Activated CD4-positive, alpha-beta T cell treated with anti-CD3 and anti-CD28 coated beads, Interleukin-2, amount 10 ng/mL, durations not matched to agents 7 days and 5 days (primary cell): ENCODE measurements at regions of chr4 and their contacts with region 1.

Region 1: DNA sequence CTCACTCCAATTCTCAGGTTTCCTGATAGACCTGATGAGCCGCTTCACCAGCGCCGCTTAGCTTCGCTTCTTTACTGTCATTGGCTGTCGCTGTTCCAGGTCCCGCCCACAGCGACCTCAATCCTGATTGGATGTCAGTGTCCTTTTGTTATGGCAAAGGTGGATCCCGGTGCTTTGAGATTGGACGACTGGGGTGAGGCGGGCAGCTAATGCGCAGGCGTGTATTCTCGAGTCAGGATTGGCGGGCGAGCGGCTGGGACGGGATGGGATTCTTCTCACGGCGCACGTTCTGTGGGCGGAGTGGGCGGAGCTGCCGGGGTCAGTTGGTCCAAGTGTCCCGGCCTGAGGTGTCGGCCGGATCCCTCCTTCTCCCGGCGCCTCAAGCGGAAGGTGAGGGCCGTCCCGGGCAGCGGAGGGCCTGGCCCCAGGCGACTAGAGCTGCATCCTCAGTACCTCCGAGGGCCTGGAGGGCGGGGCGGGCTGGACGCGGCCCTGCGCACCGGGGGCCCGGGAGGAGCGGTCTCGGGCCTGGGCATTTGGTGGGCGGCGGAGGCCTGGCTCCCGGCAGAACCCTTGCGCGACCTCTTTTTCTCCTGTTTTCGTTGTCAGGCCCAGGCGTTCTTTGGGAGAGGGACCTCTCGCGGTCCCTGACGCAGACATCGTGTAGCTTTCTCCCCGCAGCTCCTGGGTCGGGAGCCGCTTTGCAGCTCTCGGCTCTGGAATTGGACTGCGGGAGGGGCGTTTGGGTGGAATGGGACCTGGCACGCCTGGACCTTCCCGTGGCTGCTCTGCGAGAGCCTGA is at the start of gene SCOC:
- DNase-seq: peak; percentile 99
- H3K4me3 Mint-ChIP-seq: no peak within 1 kb of the TSS
- H3K27ac Mint-ChIP-seq: no peak within 1 kb of the TSS
- H3K4me1 Mint-ChIP-seq: peaks cover 28% of the 10 kb centered on the region
- H3K27me3 Mint-ChIP-seq: no peaks in the 10 kb centered on the region
- total RNA-seq, gene SCOC: 20.9 to 22.2 TPM

Region 2: DNA sequence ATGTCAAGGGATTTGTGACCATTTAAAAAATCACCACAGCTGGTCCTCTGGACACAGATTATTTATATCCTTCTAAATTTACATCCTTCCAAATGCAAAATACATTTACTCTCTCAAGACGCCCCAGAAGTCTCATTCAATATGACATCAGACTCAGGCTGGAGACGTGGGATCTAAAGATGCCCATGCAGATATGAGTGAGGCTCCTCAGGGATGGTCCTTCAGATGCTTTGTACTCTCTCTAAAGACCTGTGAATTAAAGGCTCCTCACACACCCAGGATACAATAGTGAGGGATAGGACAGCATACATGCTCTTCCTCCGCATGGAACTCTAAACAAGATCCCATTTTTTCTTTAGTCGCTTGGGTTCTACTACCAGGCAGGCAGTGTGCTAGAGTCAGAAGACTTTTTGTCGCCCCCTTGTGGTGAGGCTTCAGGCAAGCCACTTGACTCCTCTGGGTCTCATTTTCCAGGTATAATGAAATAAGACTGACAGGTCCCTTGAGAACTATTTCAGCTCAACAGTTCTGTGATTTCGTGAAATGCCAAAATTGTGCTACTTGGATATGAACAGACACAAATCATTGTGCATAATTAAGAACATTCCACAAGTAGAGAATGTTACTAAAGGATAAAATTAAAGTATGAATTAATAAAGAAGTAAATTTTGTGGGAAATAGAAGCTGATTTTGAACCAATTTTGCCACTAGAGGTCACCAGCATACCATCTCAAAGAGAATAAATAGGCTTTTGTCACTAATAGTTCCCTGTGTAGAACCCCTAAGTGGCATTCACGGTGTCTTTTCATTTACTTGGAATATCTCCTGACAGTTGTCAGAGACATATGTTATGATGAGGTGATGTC is 13.7 kb before region 1 on chr4:
- CTCF ChIA-PET with region 1: interaction called, 10 read pairs
- POLR2A ChIA-PET with region 1: no interaction called
- DNase-seq: peak; percentile 88
- H3K4me3 Mint-ChIP-seq: no peak overlapping the region
- H3K27ac Mint-ChIP-seq: no peak overlapping the region
- H3K4me1 Mint-ChIP-seq: no peaks in the 10 kb centered on the region
- H3K27me3 Mint-ChIP-seq: peaks cover 7% of the 10 kb centered on the region

Region 3: GRCh38 chr4:140523857-140524742 is 150.6 kb after region 1 on chr4 and contains the start of gene ELMOD2:
- CTCF ChIA-PET with region 1: interaction called, 10 read pairs
- POLR2A ChIA-PET with region 1: no interaction called
- DNase-seq: peak; percentile 98
- H3K4me3 Mint-ChIP-seq: peak within 1 kb of the TSS; percentile 87
- H3K27ac Mint-ChIP-seq: peak within 1 kb of the TSS; percentile 83
- H3K4me1 Mint-ChIP-seq: peaks cover 23% of the 10 kb centered on the region
- H3K27me3 Mint-ChIP-seq: peaks cover 2% of the 10 kb centered on the region
- total RNA-seq, gene ELMOD2: 16.8 to 17.4 TPM